Esophagus muscularis mucosa (tissue), 4 donors: ENCODE measurements at regions of chr1 and their contacts with region 1.

Region 1: GRCh38 chr1:178501705-178502329 is 5.1 kb upstream of the CLEC20A start:
- DNase-seq: no peak
- H3K4me3 ChIP-seq: no peak overlapping the region
- H3K27ac ChIP-seq: no peak overlapping the region
- H3K4me1 ChIP-seq: no peaks in the 10 kb centered on the region
- H3K27me3 ChIP-seq: no peaks in the 10 kb centered on the region
- CTCF ChIP-seq: peak; percentile 71 to 93 (median 80)
- EP300 ChIP-seq: no peak
- POLR2A ChIP-seq: no peak

Region 2: DNA sequence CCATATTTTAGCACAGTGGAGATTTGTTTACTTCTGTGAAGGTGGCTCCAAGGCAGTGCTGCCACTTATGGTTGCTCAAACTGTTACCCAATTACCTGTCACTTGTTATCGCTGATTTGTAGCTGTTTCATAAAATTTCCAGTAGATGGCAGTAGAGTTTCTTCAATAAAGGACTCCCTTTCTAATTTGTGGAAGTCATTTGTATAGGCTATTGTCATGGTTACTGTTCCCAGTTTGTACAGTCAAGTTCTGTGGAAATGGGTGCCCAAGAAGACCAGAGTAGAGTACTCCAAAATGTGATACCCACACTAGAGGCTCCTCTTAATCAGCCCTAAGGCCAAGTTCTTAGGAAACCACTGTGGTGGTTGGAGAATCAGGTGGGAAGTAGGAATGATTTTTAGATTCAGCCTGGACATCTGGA is 191.1 kb before region 1 on chr1:
- intact Hi-C with region 1: loop called (anchors 2 kb)
- DNase-seq: no peak
- H3K4me3 ChIP-seq: no peak overlapping the region
- H3K27ac ChIP-seq: no peak overlapping the region
- H3K4me1 ChIP-seq: peaks cover 7 to 12% (median 8%) of the 10 kb centered on the region in 4 donors
- H3K27me3 ChIP-seq: no peaks in the 10 kb centered on the region
- CTCF ChIP-seq: peak; percentile 71 to 78 (median 74)
- EP300 ChIP-seq: no peak
- POLR2A ChIP-seq: no peak